RWPE1 (cell line): ENCODE measurements at regions of chr10 and their contacts with region 1.

Region 1: GRCh38 chr10:75556320-75556719 is 124.9 kb downstream of the LRMDA start:
- DNase-seq: no peak
- H3K27ac ChIP-seq: no peak overlapping the region
- CTCF ChIP-seq: no peak

Region 2: GRCh38 chr10:75972491-75973276 is 416.4 kb after region 1 on chr10:
- CTCF ChIA-PET with region 1: no interaction called
- POLR2A ChIA-PET with region 1: interaction called, 10 read pairs
- DNase-seq: no peak
- H3K27ac ChIP-seq: no peak overlapping the region
- CTCF ChIP-seq: no peak